ENCODE measurements at regions of chrX and their contacts with region 1.

Region 1: GRCh38 chrX:131841496-131842410 is 181.3 kb upstream of the STK26 start:
- DNase-seq: peak; percentile 50
- ATAC-seq: peak; percentile 94
- H3K4me3 ChIP-seq: peak overlapping the region in 1 of 3 experiments; percentile 44; a peak in 1 of 6 replicates
- H3K27ac ChIP-seq: no peak overlapping the region
- H3K4me1 ChIP-seq: 0 out of 2 replicates have a peak, but pooled peaks cover 10% of the 10 kb centered on the region
- H3K27me3 ChIP-seq: no peaks in the 10 kb centered on the region
- CTCF ChIP-seq: peak; percentile 84
- EP300 ChIP-seq: no peak
- POLR2A ChIP-seq: no peak
- RAD21 ChIP-seq: peak; percentile 56; the same call in 1 of the 2 replicates

Region 2: DNA sequence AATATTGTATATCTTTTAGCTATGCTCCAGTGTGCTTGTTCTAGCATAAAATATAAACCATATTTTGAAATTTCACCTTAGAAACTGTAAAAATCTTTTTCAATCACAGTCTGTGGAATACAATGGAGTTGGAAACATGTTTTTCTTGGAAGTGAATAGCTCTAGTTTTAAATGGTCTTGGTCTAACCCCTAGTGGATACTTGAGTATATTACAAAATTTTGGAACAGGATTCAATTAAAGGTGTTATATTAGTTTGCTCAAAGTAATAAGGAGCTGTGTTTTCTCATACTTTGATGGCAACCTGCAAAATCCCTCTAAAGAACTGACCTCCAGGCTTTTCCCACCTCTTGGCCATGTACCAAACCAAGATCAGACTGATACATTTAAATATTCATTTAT is 229.5 kb after region 1 on chrX:
- CTCF ChIA-PET with region 1: interaction called, 3 read pairs
- POLR2A ChIA-PET with region 1: no interaction called
- in situ Hi-C with region 1: no loop called
- intact Hi-C with region 1: loop called (anchors 1 kb)
- DNase-seq: peak; percentile 1
- ATAC-seq: no peak
- H3K4me3 ChIP-seq: no peak overlapping the region
- H3K27ac ChIP-seq: no peak overlapping the region
- H3K4me1 ChIP-seq: peaks cover 10% of the 10 kb centered on the region
- H3K27me3 ChIP-seq: no peaks in the 10 kb centered on the region
- CTCF ChIP-seq: 0 out of 2 replicates have a peak, but pooled peaks have one; percentile 6
- EP300 ChIP-seq: no peak
- POLR2A ChIP-seq: no peak
- RAD21 ChIP-seq: no peak

Region 3: DNA sequence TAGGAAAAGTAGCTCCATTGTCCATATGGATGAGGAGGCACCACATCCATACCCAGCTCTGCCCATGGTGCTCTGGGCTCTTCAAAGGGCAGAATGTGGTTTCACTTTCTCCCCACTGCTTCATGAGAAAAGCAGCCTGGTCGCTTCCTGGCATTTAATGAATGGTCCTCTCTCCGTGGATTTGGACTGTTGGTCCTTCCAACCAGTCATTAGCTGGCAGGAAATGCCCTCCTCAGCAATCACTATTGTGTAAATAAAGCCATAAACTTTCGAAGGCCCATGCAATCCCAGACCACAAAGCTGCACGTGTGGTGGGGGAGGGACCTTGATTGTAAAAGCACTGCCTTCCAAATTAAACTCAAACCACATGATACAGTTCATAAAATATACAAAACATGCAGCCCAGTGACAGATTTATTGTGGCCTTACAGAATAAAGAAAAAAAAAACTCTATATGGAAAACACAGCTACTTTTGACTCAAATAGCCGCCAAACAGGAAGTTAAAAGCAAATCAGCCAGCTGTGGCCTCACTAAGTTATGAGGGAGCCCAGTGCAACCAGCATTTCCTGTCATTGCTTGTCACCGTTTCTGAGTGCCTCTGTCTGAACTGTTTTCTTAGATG is 638.9 kb after region 1 on chrX:
- CTCF ChIA-PET with region 1: no interaction called
- POLR2A ChIA-PET with region 1: no interaction called
- in situ Hi-C with region 1: no loop called
- intact Hi-C with region 1: no loop called
- DNase-seq: peak; percentile 82
- ATAC-seq: peak; percentile 76
- H3K4me3 ChIP-seq: peak overlapping the region in 1 of 3 experiments; percentile 32; a peak in 3 of 6 replicates
- H3K27ac ChIP-seq: peak overlapping the region; percentile 68
- H3K4me1 ChIP-seq: peaks cover 93% of the 10 kb centered on the region
- H3K27me3 ChIP-seq: no peaks in the 10 kb centered on the region
- CTCF ChIP-seq: no peak
- EP300 ChIP-seq: peak in 1 of 2 experiments; percentile 50; a peak in 1 of 4 replicates
- POLR2A ChIP-seq: peak in 1 of 2 experiments; percentile 36; a peak in 1 of 4 replicates
- RAD21 ChIP-seq: no peak

Region 4: GRCh38 chrX:132631579-132632232 is 790.0 kb after region 1 on chrX:
- CTCF ChIA-PET with region 1: no interaction called
- POLR2A ChIA-PET with region 1: no interaction called
- in situ Hi-C with region 1: loop called (anchors 10 kb)
- intact Hi-C with region 1: no loop called
- DNase-seq: peak; percentile 31
- ATAC-seq: peak; percentile 74
- H3K4me3 ChIP-seq: no peak overlapping the region
- H3K27ac ChIP-seq: no peak overlapping the region
- H3K4me1 ChIP-seq: no peaks in the 10 kb centered on the region
- H3K27me3 ChIP-seq: no peaks in the 10 kb centered on the region
- CTCF ChIP-seq: peak; percentile 68
- EP300 ChIP-seq: no peak
- POLR2A ChIP-seq: no peak
- RAD21 ChIP-seq: peak; percentile 55; the same call in 1 of the 2 replicates